Caco-2 (cell line): ENCODE measurements at regions of chr5 and their contacts with region 1.

Region 1: DNA sequence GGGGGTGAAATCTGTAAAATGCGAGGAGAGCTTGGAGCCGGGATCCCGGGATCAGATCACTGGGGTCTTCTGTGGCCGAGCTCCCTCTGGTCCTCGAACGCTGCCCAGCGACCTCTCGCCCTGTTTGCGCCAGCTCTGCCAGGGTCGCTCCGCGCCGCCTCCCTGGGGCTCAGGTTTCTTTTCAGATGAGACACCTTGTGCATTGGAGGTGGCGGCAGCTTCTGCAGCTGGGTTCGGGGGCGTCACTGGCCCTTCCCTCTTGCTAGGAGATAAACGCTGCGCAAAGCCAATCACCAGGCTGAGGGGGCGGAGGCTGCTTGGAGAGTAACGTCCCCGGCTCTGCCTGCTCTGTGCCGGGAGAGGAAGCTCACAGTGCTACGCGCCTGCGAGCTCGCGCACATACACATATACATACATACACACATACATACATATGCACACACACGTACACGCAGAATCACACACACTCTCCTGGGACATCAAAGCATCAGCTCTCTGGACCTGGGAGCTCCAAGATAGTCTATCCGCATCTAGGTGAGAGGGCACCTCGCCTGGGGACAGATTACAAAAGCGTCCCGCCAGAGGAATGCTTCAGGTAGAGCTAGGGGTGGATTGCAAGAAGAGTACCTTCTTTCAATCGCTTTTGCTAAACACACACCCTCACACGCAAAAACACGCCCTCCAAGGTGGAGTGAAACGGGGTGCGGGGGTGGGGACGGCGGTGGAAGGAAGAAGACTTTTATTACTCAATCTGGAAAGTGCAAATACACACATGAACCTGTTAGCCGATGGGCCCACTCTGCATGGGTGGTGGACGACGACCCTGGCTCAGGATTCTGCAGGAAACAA is at the start of gene ST8SIA4:
- DNase-seq: no peak
- H3K4me3 ChIP-seq: no peak within 1 kb of the TSS
- H3K4me3 Mint-ChIP-seq: peak within 1 kb of the TSS; percentile 29
- H3K27ac Mint-ChIP-seq: no peak within 1 kb of the TSS
- H3K4me1 ChIP-seq: 0 out of 2 replicates have a peak, but pooled peaks cover 4% of the 10 kb centered on the region
- H3K4me1 Mint-ChIP-seq: no peaks in the 10 kb centered on the region
- H3K27me3 ChIP-seq: no peaks in the 10 kb centered on the region; the same call in 1 of the 2 replicates
- H3K27me3 Mint-ChIP-seq: peaks cover 2% of the 10 kb centered on the region
- CTCF ChIP-seq: no peak
- total RNA-seq, gene ST8SIA4: 0.61 and 0.72 TPM in 2 replicates

Region 2: DNA sequence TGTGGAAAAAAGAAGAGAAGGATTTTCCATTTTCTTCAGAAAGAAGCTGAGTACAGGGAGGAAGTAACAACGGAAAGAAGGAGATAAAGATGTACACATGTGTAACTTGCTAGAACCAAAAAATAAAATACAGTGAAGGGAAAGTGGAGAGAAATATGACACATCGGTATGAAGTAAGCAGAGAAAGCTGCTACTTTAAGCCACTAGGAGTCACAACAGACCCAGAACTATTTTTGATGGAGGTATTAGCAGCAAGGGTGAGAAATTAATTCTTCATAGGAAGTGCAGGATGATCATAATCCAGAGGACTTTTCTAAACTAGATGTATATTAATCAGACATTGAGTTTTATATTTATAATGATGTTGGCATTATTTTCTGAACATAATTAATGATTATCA is 279.5 kb before region 1 on chr5:
- CTCF ChIA-PET with region 1: interaction called, 6 read pairs
- POLR2A ChIA-PET with region 1: no interaction called
- intact Hi-C with region 1: loop called (anchors 2 kb)
- DNase-seq: peak in 1 of 2 experiments; percentile 10
- H3K4me3 ChIP-seq: no peak overlapping the region
- H3K4me3 Mint-ChIP-seq: no peak overlapping the region
- H3K27ac Mint-ChIP-seq: no peak overlapping the region
- H3K4me1 ChIP-seq: no peaks in the 10 kb centered on the region
- H3K4me1 Mint-ChIP-seq: no peaks in the 10 kb centered on the region
- H3K27me3 ChIP-seq: no peaks in the 10 kb centered on the region
- H3K27me3 Mint-ChIP-seq: no peaks in the 10 kb centered on the region
- CTCF ChIP-seq: peak; percentile 34 to 45

Region 3: GRCh38 chr5:100777680-100778281 is 125.5 kb before region 1 on chr5:
- CTCF ChIA-PET with region 1: interaction called, 3 read pairs
- POLR2A ChIA-PET with region 1: no interaction called
- intact Hi-C with region 1: loop called (anchors 1 kb)
- DNase-seq: no peak
- H3K4me3 ChIP-seq: no peak overlapping the region
- H3K4me3 Mint-ChIP-seq: no peak overlapping the region
- H3K27ac Mint-ChIP-seq: no peak overlapping the region
- H3K4me1 ChIP-seq: no peaks in the 10 kb centered on the region
- H3K4me1 Mint-ChIP-seq: peaks cover 8% of the 10 kb centered on the region
- H3K27me3 ChIP-seq: no peaks in the 10 kb centered on the region
- H3K27me3 Mint-ChIP-seq: no peaks in the 10 kb centered on the region
- CTCF ChIP-seq: no peak

Region 4: GRCh38 chr5:100970706-100971270 is 67.5 kb after region 1 on chr5:
- CTCF ChIA-PET with region 1: no interaction called
- POLR2A ChIA-PET with region 1: no interaction called
- intact Hi-C with region 1: no loop called
- DNase-seq: no peak
- H3K4me3 ChIP-seq: no peak overlapping the region
- H3K4me3 Mint-ChIP-seq: no peak overlapping the region
- H3K27ac Mint-ChIP-seq: no peak overlapping the region
- H3K4me1 ChIP-seq: no peaks in the 10 kb centered on the region
- H3K4me1 Mint-ChIP-seq: no peaks in the 10 kb centered on the region
- H3K27me3 ChIP-seq: no peaks in the 10 kb centered on the region
- H3K27me3 Mint-ChIP-seq: no peaks in the 10 kb centered on the region
- CTCF ChIP-seq: no peak